Right cardiac atrium (tissue), 5 donors: ENCODE measurements at regions of chr5 and their contacts with region 1.

Region 1: DNA sequence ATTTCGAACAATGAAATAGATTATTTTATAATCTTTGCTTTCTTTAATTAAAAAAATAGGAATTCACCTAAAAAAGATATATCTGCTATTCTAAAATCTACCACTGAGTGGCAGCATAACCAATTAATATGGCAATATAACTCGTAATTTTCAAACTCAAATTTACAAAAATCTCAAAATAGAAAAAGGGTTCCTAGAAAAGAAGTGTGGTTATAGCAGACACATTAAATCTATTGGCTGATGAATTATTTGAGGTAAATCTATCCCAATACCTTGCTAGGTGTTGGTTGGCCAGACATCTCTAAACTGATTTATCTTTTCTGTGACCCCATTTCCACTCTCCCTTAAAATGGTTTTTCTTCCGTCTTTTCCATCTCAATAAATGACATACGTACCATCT is 30.2 kb upstream of the NRG2 start:
- DNase-seq: no peak
- ATAC-seq: no peak
- H3K4me3 ChIP-seq: no peak overlapping the region
- H3K27ac ChIP-seq: no peak overlapping the region
- H3K4me1 ChIP-seq: no peaks in the 10 kb centered on the region
- H3K27me3 ChIP-seq: no peaks in the 10 kb centered on the region

Region 2: GRCh38 chr5:139482050-139482889 is 591.0 kb before region 1 on chr5 and contains the start of gene STING1:
- intact Hi-C with region 1: no loop called
- DNase-seq: peak; percentile 89 to 93 (median 90)
- ATAC-seq: peak; percentile 74 to 77
- H3K4me3 ChIP-seq: peak within 1 kb of the TSS; percentile 55
- H3K27ac ChIP-seq: peak within 1 kb of the TSS; percentile 98
- H3K4me1 ChIP-seq: peaks cover 3% of the 10 kb centered on the region
- H3K27me3 ChIP-seq: no peaks in the 10 kb centered on the region
- total RNA-seq, gene STING1: 79.7 to 125 (median 93.8) TPM

Region 3: DNA sequence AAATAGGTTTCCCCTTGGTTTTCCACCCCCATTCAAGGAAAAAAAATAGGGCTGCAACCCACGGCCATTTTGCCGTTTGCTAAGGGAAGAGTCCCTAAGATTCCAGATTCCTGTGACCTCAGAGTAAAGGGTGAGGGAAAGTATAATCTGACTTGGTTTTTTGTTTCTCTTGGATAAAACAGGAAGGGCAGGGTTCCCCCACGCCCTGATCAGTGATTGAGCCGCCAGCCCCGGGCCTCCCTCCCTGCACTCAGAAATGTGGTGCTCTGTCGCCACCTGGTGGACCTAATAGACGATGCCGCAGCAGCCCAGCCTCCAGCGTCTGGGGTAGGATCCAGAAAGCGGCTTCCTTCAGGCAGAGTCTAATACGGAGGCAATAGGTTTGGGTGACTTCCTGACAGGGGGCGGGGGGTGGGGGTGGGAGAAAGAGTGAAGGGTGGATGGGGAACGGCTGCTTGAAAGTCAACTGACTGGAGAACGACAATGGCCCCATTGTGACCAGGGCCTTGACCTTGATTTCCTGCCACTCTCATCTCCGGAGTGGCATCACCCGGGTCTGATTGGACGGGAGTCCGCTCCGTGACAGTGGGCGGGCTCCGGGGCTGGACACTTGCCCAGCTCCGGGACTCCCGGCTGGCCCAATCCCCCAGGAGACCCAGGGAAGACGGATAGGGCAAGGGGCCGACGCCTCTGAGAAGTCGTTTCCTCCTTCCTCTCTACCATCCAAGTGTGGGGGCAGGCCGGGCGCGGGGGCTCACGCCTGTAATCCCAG is 83.9 kb after region 1 on chr5:
- intact Hi-C with region 1: loop called in 3 of 4 experiments (anchors 2 to 5 kb)
- DNase-seq: peak; percentile 92 to 96 (median 95)
- ATAC-seq: peak; percentile 96
- H3K4me3 ChIP-seq: peak overlapping the region; percentile 22
- H3K27ac ChIP-seq: peak overlapping the region; percentile 25
- H3K4me1 ChIP-seq: no peaks in the 10 kb centered on the region
- H3K27me3 ChIP-seq: no peaks in the 10 kb centered on the region

Region 4: DNA sequence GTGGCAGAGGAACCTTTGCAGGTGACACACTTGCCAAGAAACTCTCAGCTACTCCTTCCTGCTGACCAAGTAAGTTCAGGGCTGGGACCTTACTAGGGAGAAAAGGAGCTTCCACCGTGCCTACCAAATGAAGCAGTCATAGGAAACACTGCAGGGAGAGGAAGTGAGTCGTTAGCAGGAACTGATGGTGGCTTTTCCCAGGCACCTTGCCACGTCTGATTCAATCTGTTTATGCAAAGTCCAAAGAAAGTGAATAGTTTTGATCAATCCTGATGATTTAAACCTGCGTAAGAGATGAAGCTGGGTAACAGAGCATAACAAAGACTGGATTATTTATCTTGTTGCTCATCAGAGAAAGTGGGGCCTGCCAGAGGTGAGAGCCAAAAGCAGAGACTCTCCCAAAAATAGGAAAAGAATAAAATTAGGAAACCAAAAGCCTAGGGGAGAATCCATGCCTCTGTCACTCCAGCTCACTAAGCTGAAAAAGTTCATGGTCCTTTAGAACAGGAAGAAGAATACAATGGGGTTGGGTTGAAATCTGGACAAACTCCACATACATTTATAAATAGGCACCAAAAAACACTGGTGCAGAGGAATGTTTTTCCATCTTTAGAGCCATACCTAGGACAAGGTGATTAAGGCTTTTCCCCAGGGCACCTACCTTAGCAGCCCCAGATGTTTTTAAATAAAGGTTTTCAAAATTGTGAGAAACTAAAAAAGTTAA is 238.9 kb after region 1 on chr5:
- intact Hi-C with region 1: no loop called
- DNase-seq: peak in 2 of 3 donors; percentile 58 to 61
- ATAC-seq: peak; percentile 83 to 95
- H3K4me3 ChIP-seq: no peak overlapping the region
- H3K27ac ChIP-seq: peak overlapping the region; percentile 97
- H3K4me1 ChIP-seq: peaks cover 6% of the 10 kb centered on the region
- H3K27me3 ChIP-seq: no peaks in the 10 kb centered on the region